Activated CD8-positive, alpha-beta T cell treated with anti-CD3 and anti-CD28 coated beads, Interleukin-2, amount 10 ng/mL, durations not matched to agents 7 days and 5 days (primary cell): ENCODE measurements at regions of chr11 and their contacts with region 1.

Region 1: GRCh38 chr11:36564376-36565030 is 3.3 kb upstream of the RAG1 start:
- DNase-seq: peak; percentile 68
- ATAC-seq: peak; percentile 78
- H3K4me3 Mint-ChIP-seq: peak overlapping the region; percentile 31
- H3K27ac Mint-ChIP-seq: no peak overlapping the region
- H3K4me1 Mint-ChIP-seq: peaks cover 7% of the 10 kb centered on the region
- H3K27me3 Mint-ChIP-seq: peaks cover 47% of the 10 kb centered on the region

Region 2: DNA sequence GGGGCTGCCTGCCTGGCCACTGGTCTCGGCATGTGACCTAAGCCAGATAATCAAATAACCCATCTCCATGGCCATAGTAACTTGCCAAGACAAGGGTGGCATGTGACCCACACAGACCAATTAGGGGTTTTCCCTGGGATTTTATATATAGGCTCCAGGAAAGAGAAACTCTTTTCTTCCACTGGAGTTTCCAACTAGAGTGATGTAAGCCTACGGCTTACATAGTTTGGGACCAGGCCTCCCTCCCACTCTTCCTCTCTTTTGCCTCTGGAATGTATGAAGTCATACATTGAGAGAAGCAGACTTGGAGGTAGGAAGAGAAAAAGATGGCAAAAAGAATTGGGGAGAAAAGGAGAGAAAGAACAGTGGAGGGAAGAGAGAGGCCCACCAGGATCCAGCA is 705.2 kb before region 1 on chr11:
- CTCF ChIA-PET with region 1: no interaction called
- POLR2A ChIA-PET with region 1: no interaction called
- DNase-seq: no peak
- ATAC-seq: no peak
- H3K4me3 Mint-ChIP-seq: no peak overlapping the region
- H3K27ac Mint-ChIP-seq: no peak overlapping the region
- H3K4me1 Mint-ChIP-seq: no peaks in the 10 kb centered on the region
- H3K27me3 Mint-ChIP-seq: peaks cover 2% of the 10 kb centered on the region

Region 3: DNA sequence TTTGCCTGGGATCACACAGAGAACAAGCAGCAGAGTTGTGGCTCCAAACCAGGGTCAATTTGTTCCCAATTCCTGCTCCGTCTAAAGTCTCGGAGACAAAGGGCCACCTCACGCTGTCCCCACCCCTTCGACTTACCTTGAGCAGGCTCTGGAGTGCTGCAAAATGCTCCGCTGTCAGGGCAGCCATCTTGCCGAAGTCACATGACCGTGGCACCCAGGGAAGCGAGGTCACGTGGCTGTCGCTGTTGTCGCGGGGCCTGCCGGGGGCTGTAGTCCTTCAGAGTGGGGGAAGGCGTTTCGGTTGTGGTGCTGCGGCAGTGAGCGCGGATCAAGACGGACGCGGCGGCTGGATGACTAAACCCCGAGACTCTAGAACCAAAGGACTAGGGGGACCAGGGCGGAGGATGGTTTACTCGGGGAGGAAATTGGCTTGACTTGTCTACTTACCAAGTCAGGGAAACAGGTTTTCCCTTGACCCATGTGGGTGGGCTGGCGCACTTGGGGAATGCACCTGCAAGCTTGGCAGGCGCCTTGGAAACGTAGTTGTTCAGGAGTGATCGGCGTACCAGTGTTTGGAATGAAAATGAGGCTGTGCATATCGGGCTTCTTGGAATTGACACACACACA is 275.2 kb before region 1 on chr11 and contains the start of gene COMMD9:
- CTCF ChIA-PET with region 1: interaction called, 26 read pairs
- POLR2A ChIA-PET with region 1: no interaction called
- DNase-seq: peak; percentile 97
- ATAC-seq: peak; percentile 99
- H3K4me3 Mint-ChIP-seq: peak within 1 kb of the TSS; percentile 92
- H3K27ac Mint-ChIP-seq: peak within 1 kb of the TSS; percentile 89
- H3K4me1 Mint-ChIP-seq: peaks cover 28% of the 10 kb centered on the region
- H3K27me3 Mint-ChIP-seq: peaks cover 3% of the 10 kb centered on the region
- total RNA-seq, gene COMMD9: 44.6 to 47.5 TPM

Region 4: GRCh38 chr11:36463781-36464180 is 100.7 kb before region 1 on chr11:
- CTCF ChIA-PET with region 1: no interaction called
- POLR2A ChIA-PET with region 1: no interaction called
- DNase-seq: no peak
- ATAC-seq: no peak
- H3K4me3 Mint-ChIP-seq: no peak overlapping the region
- H3K27ac Mint-ChIP-seq: no peak overlapping the region
- H3K4me1 Mint-ChIP-seq: peaks cover 9% of the 10 kb centered on the region
- H3K27me3 Mint-ChIP-seq: peaks cover 4% of the 10 kb centered on the region

Region 5: GRCh38 chr11:36532941-36533601 is 31.4 kb before region 1 on chr11:
- CTCF ChIA-PET with region 1: no interaction called
- POLR2A ChIA-PET with region 1: no interaction called
- DNase-seq: no peak
- ATAC-seq: no peak
- H3K4me3 Mint-ChIP-seq: no peak overlapping the region
- H3K27ac Mint-ChIP-seq: no peak overlapping the region
- H3K4me1 Mint-ChIP-seq: no peaks in the 10 kb centered on the region
- H3K27me3 Mint-ChIP-seq: peaks cover 19% of the 10 kb centered on the region

Region 6: DNA sequence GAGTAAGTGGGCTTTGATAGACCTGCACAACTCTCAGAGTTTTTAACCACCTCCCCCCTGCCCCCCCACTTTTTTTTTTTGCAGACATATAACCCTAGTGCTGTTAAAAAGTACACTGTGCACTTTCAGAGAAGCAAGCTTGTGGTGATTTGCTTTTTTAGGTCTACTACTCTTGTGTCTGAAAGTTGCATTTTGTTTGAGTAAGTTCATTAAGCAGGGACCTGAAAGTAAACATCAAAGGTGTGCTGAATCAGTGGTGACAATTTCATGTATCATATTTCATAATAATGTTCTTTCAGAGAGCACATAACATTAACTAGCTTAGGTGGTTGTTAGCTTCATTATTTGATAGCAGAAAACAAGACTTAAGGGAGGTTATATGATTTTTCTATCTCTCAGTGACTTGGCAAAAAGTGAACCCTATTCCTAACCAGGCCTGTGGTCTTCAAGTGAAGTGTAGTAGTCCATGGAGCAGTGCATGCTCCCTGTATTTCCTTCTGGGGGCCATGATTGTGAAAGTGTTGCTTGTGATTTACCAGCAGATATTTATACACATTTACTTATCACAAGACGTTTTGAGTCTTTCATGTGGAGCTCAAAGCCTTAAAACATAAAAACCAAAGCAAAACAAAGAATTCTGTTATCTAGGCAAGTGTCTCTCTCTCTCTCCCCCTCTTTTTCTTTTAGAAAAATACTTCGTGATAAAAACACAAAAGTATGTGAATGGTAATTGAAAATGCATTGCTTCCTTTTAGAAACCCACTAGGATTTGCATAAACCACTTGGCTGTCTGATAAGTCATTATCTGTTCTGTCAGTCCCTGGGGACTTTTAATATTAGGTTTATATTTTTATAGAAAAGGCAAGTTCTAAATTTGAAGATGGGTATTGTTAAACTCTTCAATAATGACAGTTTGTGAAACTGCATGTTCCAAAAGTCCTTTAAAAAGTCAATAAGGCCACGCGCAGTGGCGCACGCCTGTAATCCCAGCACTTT is 41.0 kb after region 1 on chr11:
- CTCF ChIA-PET with region 1: no interaction called
- POLR2A ChIA-PET with region 1: no interaction called
- DNase-seq: no peak
- ATAC-seq: no peak
- H3K4me3 Mint-ChIP-seq: no peak overlapping the region
- H3K27ac Mint-ChIP-seq: no peak overlapping the region
- H3K4me1 Mint-ChIP-seq: no peaks in the 10 kb centered on the region
- H3K27me3 Mint-ChIP-seq: peaks cover 5% of the 10 kb centered on the region

Region 7: GRCh38 chr11:36622431-36623136 is 58.1 kb after region 1 on chr11:
- CTCF ChIA-PET with region 1: interaction called, 13 read pairs
- POLR2A ChIA-PET with region 1: no interaction called
- DNase-seq: no peak
- ATAC-seq: no peak
- H3K4me3 Mint-ChIP-seq: no peak overlapping the region
- H3K27ac Mint-ChIP-seq: no peak overlapping the region
- H3K4me1 Mint-ChIP-seq: no peaks in the 10 kb centered on the region
- H3K27me3 Mint-ChIP-seq: peaks cover 18% of the 10 kb centered on the region

Region 8: DNA sequence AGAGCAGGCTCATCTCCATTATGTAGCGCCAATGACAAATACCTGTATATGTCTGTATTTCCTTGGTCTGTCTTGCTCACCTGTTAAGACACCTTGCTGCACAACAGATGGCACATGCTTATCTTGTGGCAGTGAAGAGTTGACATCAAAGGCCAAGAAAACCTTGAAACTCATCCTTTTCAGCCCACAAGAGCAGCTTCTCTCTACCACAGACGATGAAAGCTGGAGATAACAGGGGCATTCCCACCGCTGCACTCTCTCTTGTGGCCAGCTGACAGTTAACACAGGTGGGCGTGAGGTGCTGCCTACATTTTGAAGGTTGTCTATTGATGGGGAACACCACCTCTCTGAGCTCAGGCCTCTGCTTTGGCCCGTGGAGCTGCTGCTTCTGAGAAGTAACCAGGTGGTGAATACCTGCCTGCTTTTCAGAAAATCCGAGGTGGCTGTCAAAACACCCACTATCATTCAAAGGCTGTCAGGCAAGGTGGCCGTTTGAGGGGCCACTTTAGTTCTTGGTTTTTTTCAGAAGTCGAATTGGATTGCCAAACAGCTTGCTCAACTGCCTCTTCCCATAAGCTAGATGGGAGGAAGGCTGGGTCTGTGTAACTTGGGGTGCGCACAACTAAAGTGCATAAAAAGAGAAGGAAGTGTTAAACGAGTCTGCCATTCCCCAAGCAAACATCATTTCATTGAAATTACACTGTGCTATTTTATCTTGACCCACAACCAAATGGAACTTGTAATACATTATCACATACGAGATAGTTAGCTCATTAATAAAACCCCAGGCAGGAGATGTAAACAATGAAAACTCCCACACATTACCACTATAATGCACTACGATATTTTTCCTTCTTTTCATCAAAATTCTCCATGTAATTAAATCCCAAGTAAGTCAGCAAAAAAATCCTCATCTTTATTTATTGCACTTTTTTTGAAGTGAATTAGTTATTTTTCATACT is 120.6 kb after region 1 on chr11:
- CTCF ChIA-PET with region 1: interaction called, 11 read pairs
- POLR2A ChIA-PET with region 1: no interaction called
- DNase-seq: peak; percentile 42
- ATAC-seq: peak; percentile 47
- H3K4me3 Mint-ChIP-seq: no peak overlapping the region
- H3K27ac Mint-ChIP-seq: no peak overlapping the region
- H3K4me1 Mint-ChIP-seq: peaks cover 11% of the 10 kb centered on the region
- H3K27me3 Mint-ChIP-seq: peaks cover 50% of the 10 kb centered on the region

Region 9: DNA sequence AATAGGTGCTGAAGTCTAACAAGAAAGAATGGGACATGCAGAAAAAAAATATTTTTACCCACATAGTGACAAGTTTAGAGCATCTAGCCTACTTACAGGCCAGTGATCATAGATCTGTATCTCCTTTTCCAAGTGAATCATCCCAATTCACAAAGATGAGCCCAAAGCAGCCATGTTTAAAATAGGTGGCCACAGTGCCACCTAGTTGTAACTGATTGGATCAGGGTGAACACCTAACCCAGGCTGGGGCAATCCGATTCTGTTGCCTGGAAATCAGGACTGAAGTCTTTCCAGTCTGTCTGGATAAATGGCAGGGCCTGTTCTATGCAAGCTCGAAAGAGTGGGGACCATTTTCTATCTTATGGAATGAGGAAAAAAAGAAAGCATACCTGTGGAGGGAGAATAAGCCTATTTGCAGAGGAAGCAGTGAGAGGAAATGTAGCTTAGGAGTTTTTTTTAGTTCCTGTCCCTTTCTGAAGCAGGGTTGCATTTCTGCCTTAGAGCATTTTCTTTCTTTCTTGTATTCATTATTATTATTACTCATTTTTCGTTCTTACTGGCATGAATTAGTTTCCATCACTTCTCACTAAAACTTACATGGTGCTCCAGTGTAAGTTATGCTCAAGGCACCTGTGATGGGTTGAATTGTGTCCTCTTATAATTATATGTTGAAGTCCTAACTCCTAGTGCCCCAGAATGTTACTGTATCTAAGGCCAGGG is 146.8 kb after region 1 on chr11:
- CTCF ChIA-PET with region 1: interaction called, 19 read pairs
- POLR2A ChIA-PET with region 1: no interaction called
- DNase-seq: no peak
- ATAC-seq: no peak
- H3K4me3 Mint-ChIP-seq: no peak overlapping the region
- H3K27ac Mint-ChIP-seq: no peak overlapping the region
- H3K4me1 Mint-ChIP-seq: no peaks in the 10 kb centered on the region
- H3K27me3 Mint-ChIP-seq: peaks cover 11% of the 10 kb centered on the region

Region 10: DNA sequence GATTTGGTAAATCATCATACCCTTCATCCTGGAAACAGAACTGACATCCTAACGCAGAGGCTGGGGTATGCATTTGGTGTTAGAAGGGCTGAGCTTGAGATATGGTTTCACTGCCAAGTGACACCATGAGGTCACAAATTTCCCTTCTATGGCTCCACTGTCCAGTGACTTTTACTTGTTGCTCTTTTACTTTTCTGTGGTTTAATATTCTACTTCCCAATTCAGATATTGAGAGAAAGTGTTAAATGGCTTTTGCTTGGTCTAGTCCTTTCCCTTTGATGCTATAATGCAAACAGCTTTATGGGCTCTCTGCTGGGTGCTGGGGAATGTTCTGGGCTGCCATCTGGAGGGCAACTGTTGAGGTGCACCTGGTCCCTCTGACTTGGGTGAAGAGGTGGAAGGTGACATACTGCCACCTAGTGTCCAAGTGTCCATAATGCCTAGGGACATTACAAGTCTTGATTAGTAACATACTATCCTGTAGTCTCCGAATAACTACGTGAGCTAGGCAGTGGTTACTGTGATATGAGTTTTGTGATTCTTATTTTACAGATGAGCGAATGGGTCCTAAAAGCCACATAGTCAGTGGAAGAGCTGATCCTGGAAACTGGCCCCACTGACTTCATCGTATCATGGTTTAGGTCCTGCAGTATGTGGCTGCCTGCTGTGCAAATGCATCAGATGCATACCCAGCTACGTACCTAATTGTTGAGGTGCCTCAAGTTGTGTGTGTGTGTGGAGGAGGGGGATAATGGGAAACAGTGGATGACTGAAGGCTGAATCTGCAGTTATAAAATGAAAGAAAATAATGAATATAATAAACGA is 182.6 kb after region 1 on chr11:
- CTCF ChIA-PET with region 1: interaction called, 244 read pairs
- POLR2A ChIA-PET with region 1: no interaction called
- DNase-seq: peak; percentile 94
- ATAC-seq: peak; percentile 99
- H3K4me3 Mint-ChIP-seq: no peak overlapping the region
- H3K27ac Mint-ChIP-seq: no peak overlapping the region
- H3K4me1 Mint-ChIP-seq: no peaks in the 10 kb centered on the region
- H3K27me3 Mint-ChIP-seq: peaks cover 27% of the 10 kb centered on the region